H1 (cell line): ENCODE measurements at regions of chr3 and their contacts with region 1.

Region 1: DNA sequence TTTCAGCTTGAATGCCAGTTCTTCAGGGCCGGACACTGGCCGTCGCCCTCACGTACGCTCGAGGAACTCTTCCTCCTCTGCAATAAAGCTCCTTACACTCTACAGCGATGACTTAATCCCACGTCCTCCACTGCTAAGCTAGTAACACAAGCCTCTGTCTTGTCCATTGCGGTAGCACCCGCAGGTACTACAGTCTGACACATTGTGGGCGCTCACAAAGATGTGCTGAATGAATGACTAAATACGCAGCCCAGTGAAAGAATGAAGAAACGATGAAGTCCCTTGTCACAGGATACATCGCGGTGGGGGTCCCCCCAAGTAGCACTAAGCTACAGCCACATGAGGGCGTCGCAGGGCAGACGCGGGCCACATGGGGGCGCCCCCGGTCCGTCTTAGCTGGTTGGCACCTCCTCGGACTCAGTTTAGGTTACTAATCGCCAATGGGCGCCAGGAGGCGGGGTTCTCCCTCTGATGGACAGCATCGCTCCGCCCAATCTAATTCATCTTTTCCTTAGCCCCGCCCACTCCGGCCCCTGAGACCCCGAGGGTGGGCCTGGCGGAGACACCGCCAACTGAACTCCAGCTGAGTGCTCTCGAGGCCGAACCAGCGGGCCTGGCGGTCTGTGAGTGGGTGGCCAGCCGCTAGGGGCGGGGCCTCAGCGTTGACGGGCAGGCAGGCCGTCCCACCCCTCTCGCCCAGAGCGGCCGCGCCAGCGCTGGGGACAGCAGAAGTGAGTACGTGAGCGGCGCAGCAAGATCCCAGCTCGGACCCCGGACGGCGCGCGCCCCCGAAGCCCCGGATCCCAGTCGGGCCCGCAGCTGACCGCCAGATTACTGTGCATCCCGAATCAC is at the start of gene EPHB3:
- DNase-seq: peak; percentile 99 to 100
- H3K4me3 ChIP-seq: peak within 1 kb of the TSS; percentile 13 to 63 (median 38); a peak in 7 of 8 replicates
- H3K27ac ChIP-seq: no peak within 1 kb of the TSS
- H3K4me1 ChIP-seq: peaks cover 17 to 41% (median 38%) of the 10 kb centered on the region in 4 experiments
- H3K27me3 ChIP-seq: peaks cover 52 to 83% (median 79%) of the 10 kb centered on the region in 4 experiments
- CTCF ChIP-seq: peak in 2 of 3 experiments; percentile 96 to 100; a peak in 3 of 4 replicates
- EP300 ChIP-seq: no peak
- POLR2A ChIP-seq: 0 out of 3 replicates have a peak, but pooled peaks of 1 of the 2 experiments have one; percentile 46
- RAD21 ChIP-seq: peak; percentile 98
- total RNA-seq, gene EPHB3: 0.80 and 0.91 TPM in 2 replicates

Region 2: GRCh38 chr3:184574515-184575417 is 13.5 kb after region 1 on chr3:
- CTCF ChIA-PET with region 1: interaction called, 51 read pairs
- POLR2A ChIA-PET with region 1: interaction called, 16 read pairs
- DNase-seq: peak in 1 of 2 experiments; percentile 82
- H3K4me3 ChIP-seq: peak overlapping the region in 3 of 4 experiments; percentile 10 to 40 (median 38); a peak in 4 of 8 replicates
- H3K27ac ChIP-seq: no peak overlapping the region
- H3K4me1 ChIP-seq: peaks cover 0 to 30% (median 20%) of the 10 kb centered on the region in 4 experiments; a peak in 6 of 7 replicates
- H3K27me3 ChIP-seq: peaks cover 11 to 40% (median 30%) of the 10 kb centered on the region in 4 experiments
- CTCF ChIP-seq: peak in 1 of 3 experiments; percentile 45; a peak in 1 of 4 replicates
- EP300 ChIP-seq: no peak; a peak in 1 of 3 replicates
- POLR2A ChIP-seq: no peak
- RAD21 ChIP-seq: peak; percentile 6 to 7; a peak in 2 of 4 replicates

Region 3: GRCh38 chr3:184604039-184604601 is 42.8 kb after region 1 on chr3:
- CTCF ChIA-PET with region 1: interaction called, 20 read pairs
- POLR2A ChIA-PET with region 1: interaction called, 7 read pairs
- DNase-seq: no peak
- H3K4me3 ChIP-seq: peak overlapping the region; percentile 24 to 67 (median 46)
- H3K27ac ChIP-seq: no peak overlapping the region
- H3K4me1 ChIP-seq: peaks cover 6 to 23% (median 15%) of the 10 kb centered on the region in 4 experiments
- H3K27me3 ChIP-seq: peaks cover 41 to 83% (median 78%) of the 10 kb centered on the region in 4 experiments
- CTCF ChIP-seq: peak in 2 of 3 experiments; percentile 2 to 9; a peak in 2 of 4 replicates
- EP300 ChIP-seq: no peak
- POLR2A ChIP-seq: no peak
- RAD21 ChIP-seq: no peak; a peak in 1 of 4 replicates

Region 4: DNA sequence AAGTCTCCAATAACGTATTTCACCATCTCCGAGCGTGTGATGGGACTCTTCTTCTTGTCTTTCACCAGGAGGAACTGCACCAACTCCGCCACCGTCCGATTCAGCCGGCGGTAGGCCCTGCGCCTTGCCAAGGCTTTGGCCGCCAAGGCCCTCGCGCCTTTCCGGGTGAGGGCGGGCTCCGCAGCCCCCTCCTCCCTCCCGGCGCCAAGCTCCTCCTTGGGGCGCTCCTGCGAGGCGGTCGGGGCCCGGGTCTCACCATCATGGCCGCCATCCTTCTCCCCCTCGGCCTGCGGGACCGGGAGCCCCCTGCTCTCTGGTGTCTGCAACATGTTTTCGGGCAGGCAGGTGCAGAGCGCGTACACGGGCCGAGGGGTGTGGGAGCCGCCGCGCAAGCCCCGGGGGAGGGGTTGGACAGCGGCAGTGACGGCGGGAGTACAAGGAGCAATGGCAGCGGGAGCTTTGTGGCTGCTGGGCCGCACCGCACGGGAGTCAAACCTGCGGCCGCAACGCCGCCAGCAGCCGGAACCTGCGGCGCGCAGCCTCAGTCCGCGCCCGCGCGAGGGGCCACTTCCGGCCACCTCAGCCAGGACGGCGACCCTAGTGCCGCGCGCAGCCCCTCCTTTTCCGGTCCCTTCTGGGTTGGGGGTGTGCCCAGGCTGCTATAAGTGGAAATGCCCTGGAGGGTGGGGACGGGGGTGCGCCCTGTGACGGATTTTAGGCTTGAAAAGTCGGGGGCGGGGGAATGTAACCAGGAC is 150.4 kb after region 1 on chr3 and contains the start of gene MAGEF1:
- CTCF ChIA-PET with region 1: interaction called, 6 read pairs
- POLR2A ChIA-PET with region 1: interaction called, 10 read pairs
- DNase-seq: peak; percentile 67 to 89
- H3K4me3 ChIP-seq: peak within 1 kb of the TSS; percentile 86 to 98 (median 90)
- H3K27ac ChIP-seq: peak within 1 kb of the TSS; percentile 97
- H3K4me1 ChIP-seq: peaks cover 2 to 10% (median 4%) of the 10 kb centered on the region in 4 experiments; a peak in 6 of 7 replicates
- H3K27me3 ChIP-seq: no peaks in the 10 kb centered on the region
- CTCF ChIP-seq: no peak
- EP300 ChIP-seq: no peak; a peak in 1 of 3 replicates
- POLR2A ChIP-seq: peak; percentile 91
- RAD21 ChIP-seq: peak; percentile 7 to 18; a peak in 2 of 4 replicates
- total RNA-seq, gene MAGEF1: 54.1 and 56.7 TPM in 2 replicates

Region 5: DNA sequence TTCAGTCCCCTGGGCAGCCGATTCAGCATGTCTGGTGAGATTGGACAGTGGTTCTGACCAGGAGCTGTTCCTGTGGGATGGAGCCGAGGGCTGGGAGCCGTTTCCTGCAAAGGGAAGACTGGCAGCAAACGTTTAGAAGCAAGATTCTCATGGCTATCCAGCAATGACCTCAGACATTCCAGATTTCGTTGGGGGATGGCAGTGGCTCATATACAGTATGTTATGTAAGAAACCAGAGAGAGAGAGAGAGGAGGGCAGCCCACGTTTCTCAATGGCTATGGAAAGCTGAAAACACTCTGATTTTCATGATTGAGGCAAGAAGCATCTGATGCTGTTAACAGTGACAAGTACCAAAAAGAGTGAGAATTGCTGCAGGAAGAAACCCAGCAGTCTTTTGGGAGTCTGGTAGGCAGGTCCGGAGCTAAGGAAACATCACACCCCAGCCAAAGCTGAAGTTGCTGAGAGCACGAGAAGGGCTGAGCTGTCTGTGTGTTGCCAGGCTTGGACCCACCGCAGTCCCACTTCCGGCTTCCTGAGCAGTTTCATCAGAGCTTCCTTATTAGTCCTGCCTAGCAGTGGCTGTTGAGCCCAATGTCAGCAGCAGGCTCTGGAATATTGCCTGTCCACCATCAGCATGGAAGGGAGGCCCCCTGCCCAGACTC is 225.1 kb after region 1 on chr3:
- CTCF ChIA-PET with region 1: interaction called, 15 read pairs
- POLR2A ChIA-PET with region 1: interaction called, 6 read pairs
- DNase-seq: no peak
- H3K4me3 ChIP-seq: no peak overlapping the region
- H3K27ac ChIP-seq: no peak overlapping the region
- H3K4me1 ChIP-seq: peaks cover 0 to 5% (median 1%) of the 10 kb centered on the region in 4 experiments; a peak in 4 of 7 replicates
- H3K27me3 ChIP-seq: no peaks in the 10 kb centered on the region; a peak in 1 of 7 replicates
- CTCF ChIP-seq: no peak
- EP300 ChIP-seq: no peak
- POLR2A ChIP-seq: no peak
- RAD21 ChIP-seq: no peak